OCI-LY7 (cell line): ENCODE measurements at regions of chr6 and their contacts with region 1.

Region 1: DNA sequence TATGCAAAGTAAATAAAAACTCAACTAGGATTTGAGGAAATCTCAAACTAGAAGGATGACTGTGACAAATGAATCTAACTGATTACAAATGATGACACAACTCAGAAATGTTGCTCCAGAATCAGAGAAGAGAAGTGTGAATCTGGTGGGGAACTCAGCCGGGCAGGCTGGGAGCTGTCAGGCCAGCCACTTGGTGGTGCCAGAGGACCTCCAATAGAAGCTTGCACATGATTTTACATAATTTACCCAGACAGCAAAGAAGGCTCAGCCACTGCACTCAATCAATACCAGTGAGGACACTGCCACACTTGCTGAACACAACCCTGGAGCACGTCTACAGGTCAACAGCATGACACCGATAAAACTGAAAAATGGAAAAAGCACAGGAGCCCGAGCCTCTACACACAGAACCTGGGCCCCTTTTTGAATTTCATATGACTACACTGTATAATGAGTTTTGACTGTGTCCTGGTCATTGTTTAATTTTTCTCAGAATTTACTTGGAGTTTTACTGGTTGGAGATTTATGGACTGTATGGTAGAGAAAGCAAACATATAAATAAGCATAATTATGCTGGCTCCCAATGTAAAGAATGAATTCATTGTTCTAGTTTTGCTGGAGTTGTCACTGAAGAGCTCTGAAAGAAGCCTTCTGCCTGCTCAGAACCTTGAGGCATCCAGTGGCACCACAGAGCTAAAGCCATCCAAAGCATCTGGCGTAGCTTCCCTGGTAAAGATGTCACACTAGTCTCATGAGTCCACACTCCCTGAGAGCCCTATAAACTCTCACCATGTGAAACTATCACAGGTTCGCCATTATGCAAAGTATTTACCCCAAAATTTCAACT is 296.5 kb downstream of the THBS2 start:
- DNase-seq: peak; percentile 49
- H3K4me3 ChIP-seq: no peak overlapping the region
- H3K27ac ChIP-seq: no peak overlapping the region
- H3K4me1 ChIP-seq: no peaks in the 10 kb centered on the region
- CTCF ChIP-seq: peak; percentile 83

Region 2: GRCh38 chr6:168941036-168941435 is 16.1 kb before region 1 on chr6:
- CTCF ChIA-PET with region 1: no interaction called
- POLR2A ChIA-PET with region 1: no interaction called
- intact Hi-C with region 1: no loop called
- DNase-seq: no peak
- H3K4me3 ChIP-seq: no peak overlapping the region
- H3K27ac ChIP-seq: no peak overlapping the region
- H3K4me1 ChIP-seq: no peaks in the 10 kb centered on the region
- CTCF ChIP-seq: no peak

Region 3: DNA sequence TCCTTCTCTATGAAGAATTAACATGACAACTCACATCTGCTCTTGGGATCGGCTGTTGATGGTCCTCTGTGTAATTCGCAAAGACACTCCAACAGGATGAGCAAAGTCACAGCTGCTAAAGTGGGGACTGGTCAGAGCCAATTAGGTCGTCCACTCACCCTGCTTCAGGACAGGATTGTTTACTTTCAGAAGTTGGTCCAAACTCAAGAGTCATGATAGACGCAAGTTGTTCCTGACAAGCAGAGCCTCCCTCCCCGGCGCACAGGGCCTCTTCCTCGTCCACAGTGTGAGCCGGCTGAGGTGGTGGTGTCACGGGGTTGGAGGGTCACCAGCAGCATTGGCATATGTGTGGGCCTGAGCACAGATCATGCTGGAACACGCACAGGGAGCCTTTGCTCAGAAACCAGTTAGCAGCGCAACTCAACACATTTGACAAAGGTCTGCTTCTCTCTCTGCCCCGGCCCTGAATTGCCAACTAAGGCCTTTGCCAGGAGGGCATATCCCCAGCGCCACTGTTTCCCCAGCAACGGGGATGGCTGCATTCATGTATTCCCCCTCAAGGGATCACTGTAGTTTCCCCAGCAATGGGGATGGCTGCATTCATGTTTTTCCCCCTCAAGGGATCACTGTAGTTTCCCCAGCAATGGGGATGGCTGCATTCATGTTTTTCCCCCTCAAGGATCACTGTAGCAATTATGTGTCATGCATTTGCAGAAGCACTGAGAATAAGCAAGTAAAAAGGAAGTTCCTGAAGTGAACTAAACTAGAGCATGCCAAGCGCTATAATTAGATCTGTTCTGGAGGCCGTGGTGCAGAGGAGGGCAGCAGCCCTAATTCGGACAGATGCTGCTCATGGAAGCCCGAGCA is 184.8 kb after region 1 on chr6:
- CTCF ChIA-PET with region 1: no interaction called
- POLR2A ChIA-PET with region 1: no interaction called
- intact Hi-C with region 1: no loop called
- DNase-seq: no peak
- H3K4me3 ChIP-seq: no peak overlapping the region
- H3K27ac ChIP-seq: no peak overlapping the region
- H3K4me1 ChIP-seq: no peaks in the 10 kb centered on the region
- CTCF ChIP-seq: no peak

Region 4: DNA sequence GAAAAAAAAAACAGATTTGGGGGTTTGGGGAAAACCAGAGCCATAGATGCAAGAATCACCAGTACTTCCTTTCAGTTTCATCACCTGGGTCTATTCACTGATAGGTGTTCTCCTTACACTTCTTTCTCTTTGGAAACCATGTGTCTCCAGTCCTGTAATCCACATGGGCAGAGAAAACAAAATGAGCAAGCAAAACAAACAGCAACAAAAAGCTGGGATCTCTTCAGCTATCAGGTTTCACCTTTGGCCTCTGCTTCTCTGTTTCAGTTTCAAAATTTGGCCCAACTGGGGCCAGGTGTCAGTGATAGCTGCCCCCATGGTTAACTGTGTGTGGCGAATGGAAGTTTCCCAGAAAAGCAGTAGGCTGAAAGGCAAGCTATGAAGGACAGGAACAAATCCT is 516.6 kb after region 1 on chr6:
- CTCF ChIA-PET with region 1: no interaction called
- POLR2A ChIA-PET with region 1: no interaction called
- intact Hi-C with region 1: no loop called
- DNase-seq: no peak
- H3K4me3 ChIP-seq: no peak overlapping the region
- H3K27ac ChIP-seq: no peak overlapping the region
- H3K4me1 ChIP-seq: no peaks in the 10 kb centered on the region
- CTCF ChIP-seq: no peak

Region 5: GRCh38 chr6:170529839-170530469 is 1572.8 kb after region 1 on chr6:
- CTCF ChIA-PET with region 1: no interaction called
- POLR2A ChIA-PET with region 1: no interaction called
- intact Hi-C with region 1: loop called (anchors 5 kb)
- DNase-seq: peak; percentile 69
- H3K4me3 ChIP-seq: no peak overlapping the region
- H3K27ac ChIP-seq: no peak overlapping the region
- H3K4me1 ChIP-seq: no peaks in the 10 kb centered on the region
- CTCF ChIP-seq: peak; percentile 94